Calu3 (cell line): ENCODE measurements at regions of chr12 and their contacts with region 1.

Region 1: GRCh38 chr12:40300490-40300889 is 75.7 kb downstream of the LRRK2 start:
- DNase-seq: no peak
- H3K4me3 Mint-ChIP-seq: no peak overlapping the region
- H3K27ac Mint-ChIP-seq: no peak overlapping the region
- H3K4me1 Mint-ChIP-seq: no peaks in the 10 kb centered on the region
- H3K27me3 Mint-ChIP-seq: no peaks in the 10 kb centered on the region
- CTCF ChIP-seq: no peak

Region 2: GRCh38 chr12:40086471-40086870 is 214.0 kb before region 1 on chr12:
- CTCF ChIA-PET with region 1: no interaction called
- intact Hi-C with region 1: no loop called
- DNase-seq: no peak
- H3K4me3 Mint-ChIP-seq: no peak overlapping the region
- H3K27ac Mint-ChIP-seq: no peak overlapping the region
- H3K4me1 Mint-ChIP-seq: no peaks in the 10 kb centered on the region
- H3K27me3 Mint-ChIP-seq: no peaks in the 10 kb centered on the region
- CTCF ChIP-seq: no peak

Region 3: DNA sequence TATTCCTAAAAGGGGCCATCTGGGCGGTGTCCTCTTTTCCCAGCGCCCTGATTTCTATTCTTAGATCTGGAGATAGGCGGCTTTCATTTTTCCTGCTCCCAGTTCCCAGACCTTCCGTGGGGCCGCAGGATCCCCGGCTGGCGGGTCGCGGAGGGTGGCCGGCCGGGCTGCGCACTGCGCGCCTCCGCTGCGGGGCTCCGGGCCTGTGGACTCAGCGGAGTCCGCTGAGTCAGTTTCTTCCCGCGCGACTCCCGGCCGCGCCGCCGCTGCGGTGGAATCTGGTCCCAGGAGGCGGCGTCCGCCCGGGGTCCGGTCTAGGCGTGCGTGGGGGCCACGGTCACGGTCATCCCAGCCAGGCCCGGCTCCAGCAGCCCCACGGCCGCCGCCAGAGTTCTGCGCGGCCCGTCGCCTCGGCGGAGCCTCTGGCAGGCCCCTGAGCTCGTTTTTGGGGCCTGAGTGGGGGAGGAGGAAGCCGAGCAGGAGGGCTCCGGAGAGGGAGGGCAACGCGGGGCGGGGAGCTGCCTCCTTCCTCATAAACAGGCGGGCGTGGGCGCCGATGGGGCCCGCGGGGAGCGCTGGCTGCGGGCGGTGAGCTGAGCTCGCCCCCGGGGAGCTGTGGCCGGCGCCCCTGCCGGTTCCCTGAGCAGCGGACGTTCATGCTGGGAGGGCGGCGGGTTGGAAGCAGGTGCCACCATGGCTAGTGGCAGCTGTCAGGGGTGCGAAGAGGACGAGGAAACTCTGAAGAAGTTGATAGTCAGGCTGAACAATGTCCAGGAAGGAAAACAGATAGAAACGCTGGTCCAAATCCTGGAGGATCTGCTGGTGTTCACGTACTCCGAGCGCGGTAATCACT is 75.8 kb before region 1 on chr12 and contains the start of gene LRRK2:
- CTCF ChIA-PET with region 1: no interaction called
- intact Hi-C with region 1: loop called (anchors 5 kb)
- DNase-seq: peak; percentile 36
- H3K4me3 Mint-ChIP-seq: peak within 1 kb of the TSS; percentile 73
- H3K27ac Mint-ChIP-seq: peak within 1 kb of the TSS; percentile 54
- H3K4me1 Mint-ChIP-seq: peaks cover 24% of the 10 kb centered on the region
- H3K27me3 Mint-ChIP-seq: no peaks in the 10 kb centered on the region
- CTCF ChIP-seq: no peak
- total RNA-seq, gene LRRK2: 0.73 and 2.0 TPM in 2 replicates